Psoas muscle (tissue), 8 donors: ENCODE measurements at regions of chrX and their contacts with region 1.

Region 1: GRCh38 chrX:18886344-18887161 is 97.4 kb downstream of the PHKA2 start:
- DNase-seq: peak; percentile 77 to 90
- ATAC-seq: peak; percentile 78 to 85 (median 81)
- H3K4me3 ChIP-seq: peak overlapping the region; percentile 51
- H3K27ac ChIP-seq: peak overlapping the region; percentile 80
- H3K4me1 ChIP-seq: no peaks in the 10 kb centered on the region
- H3K27me3 ChIP-seq: no peaks in the 10 kb centered on the region
- CTCF ChIP-seq: peak; percentile 51

Region 2: DNA sequence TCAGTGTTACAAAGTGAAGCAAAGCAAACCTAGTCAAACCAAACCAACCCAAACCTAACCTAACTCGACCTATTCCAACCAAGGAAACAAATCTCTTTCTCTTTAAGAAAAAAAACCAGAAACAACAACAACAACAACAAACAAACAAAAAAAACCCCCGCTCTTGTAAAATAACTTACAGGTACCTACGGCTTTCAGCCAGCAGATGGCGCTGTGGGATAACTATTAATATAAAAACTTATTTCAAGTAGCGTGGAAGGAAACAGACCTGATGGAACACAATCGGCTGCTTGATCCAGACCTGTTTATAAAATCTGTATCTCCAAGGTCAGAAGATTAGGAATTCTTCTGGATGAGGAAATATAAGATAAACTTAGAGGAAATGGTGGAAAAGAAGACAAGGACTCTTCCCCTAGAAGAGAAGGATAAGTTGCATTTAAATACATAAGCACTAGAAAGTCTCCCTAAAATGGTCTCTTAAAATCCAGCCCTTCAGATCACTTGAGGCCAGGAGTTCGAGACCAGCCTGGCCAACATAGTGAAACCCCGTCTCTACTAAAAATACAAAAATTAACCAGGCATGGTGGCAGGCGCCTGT is 495.5 kb before region 1 on chrX:
- intact Hi-C with region 1: loop called in 1 of 2 experiments (anchors 5 kb)
- DNase-seq: peak; percentile 45 to 59
- ATAC-seq: peak in 3 of 4 donors; percentile 47 to 77 (median 56)
- H3K4me3 ChIP-seq: no peak overlapping the region
- H3K27ac ChIP-seq: no peak overlapping the region
- H3K4me1 ChIP-seq: no peaks in the 10 kb centered on the region
- H3K27me3 ChIP-seq: no peaks in the 10 kb centered on the region
- CTCF ChIP-seq: peak; percentile 78

Region 3: DNA sequence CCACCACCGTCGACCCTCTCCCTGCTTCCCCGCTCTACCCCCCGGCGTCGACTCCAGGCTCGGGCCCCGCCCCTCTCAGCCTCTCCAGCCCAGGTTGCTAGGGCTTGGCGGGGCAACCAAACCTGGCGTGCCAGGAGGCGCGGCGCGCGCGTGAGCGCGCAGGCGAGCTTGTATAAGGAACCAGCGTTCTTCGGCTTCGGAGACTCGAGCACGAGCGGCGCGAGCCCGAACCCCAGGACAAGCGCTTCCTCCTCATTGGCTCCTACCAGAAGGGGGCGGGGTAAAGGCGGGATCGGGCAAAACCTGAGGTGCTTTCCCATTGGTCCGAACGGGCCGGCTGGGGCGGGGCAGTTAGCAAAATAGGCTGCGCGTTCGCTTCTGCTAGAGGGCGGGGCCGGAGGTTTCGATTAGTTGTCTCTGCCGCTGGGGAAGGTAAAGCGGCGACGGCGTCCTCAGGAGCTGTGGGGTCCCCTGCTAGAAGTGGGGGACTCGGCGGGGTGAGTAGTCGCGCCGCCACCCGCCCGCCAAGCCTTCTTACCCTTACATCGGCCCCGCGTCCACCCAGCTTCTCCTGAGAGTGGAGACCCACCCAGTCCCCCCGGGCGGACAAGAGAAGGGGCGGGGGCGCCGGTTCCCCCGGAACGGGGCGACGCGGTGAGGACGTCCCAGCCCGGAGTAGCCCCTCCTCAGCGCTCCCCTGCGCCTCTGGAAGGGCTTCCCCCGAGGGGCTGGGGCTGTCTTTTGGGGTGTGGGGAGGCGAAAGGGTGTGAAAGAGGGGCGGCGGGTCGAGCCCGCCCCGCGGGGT is 461.2 kb before region 1 on chrX and contains the start of gene CDKL5:
- intact Hi-C with region 1: loop called in 1 of 2 experiments (anchors 10 kb)
- DNase-seq: peak; percentile 96 to 98
- ATAC-seq: peak; percentile 98 to 99 (median 99)
- H3K4me3 ChIP-seq: peak within 1 kb of the TSS; percentile 81
- H3K27ac ChIP-seq: peak within 1 kb of the TSS; percentile 78
- H3K4me1 ChIP-seq: no peaks in the 10 kb centered on the region
- H3K27me3 ChIP-seq: peaks cover 0 to 26% (median 0%) of the 10 kb centered on the region in 3 donors
- CTCF ChIP-seq: no peak
- total RNA-seq, gene CDKL5: 1.6 to 3.8 (median 2.9) TPM

Region 4: GRCh38 chrX:18833071-18833731 is 53.4 kb before region 1 on chrX:
- intact Hi-C with region 1: loop called in 1 of 2 experiments (anchors 5 kb)
- DNase-seq: peak; percentile 58 to 84
- ATAC-seq: peak; percentile 97 to 98 (median 97)
- H3K4me3 ChIP-seq: peak overlapping the region; percentile 49
- H3K27ac ChIP-seq: peak overlapping the region; percentile 82
- H3K4me1 ChIP-seq: no peaks in the 10 kb centered on the region
- H3K27me3 ChIP-seq: no peaks in the 10 kb centered on the region
- CTCF ChIP-seq: no peak